ENCODE measurements at regions of chr15 and their contacts with region 1.

Region 1: DNA sequence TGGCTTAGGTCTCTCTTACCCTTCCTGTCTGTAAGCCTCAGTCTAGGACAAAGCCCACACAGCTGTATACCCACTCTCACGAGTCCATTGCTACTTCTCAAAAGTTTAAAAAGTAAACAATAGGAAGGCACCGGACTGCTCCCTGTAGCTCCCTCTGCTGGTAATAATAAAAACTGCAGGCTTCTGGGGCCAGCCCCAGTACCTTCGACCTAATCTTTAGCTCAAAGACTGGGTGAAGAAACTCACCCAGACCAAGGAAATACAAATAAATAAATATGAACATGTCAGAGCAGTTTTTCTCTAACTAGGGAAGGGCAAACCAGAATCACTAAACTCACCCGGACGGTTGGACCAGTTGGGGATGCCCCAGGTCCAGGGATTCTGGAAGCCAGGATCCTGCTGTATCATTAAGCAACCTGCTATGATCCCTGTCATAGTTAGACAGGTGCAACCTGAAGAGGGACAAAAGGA is 5.0 kb downstream of the FAM219B start:
- DNase-seq: no peak
- H3K4me3 ChIP-seq: no peak overlapping the region
- H3K27ac ChIP-seq: peak overlapping the region in 3 of 4 donors; percentile 13 to 48 (median 42)
- H3K4me1 ChIP-seq: peaks cover 26 to 40% (median 33%) of the 10 kb centered on the region in 4 donors
- H3K27me3 ChIP-seq: no peaks in the 10 kb centered on the region
- CTCF ChIP-seq: peak; percentile 90 to 97 (median 94)
- EP300 ChIP-seq: no peak
- POLR2A ChIP-seq: no peak

Region 2: DNA sequence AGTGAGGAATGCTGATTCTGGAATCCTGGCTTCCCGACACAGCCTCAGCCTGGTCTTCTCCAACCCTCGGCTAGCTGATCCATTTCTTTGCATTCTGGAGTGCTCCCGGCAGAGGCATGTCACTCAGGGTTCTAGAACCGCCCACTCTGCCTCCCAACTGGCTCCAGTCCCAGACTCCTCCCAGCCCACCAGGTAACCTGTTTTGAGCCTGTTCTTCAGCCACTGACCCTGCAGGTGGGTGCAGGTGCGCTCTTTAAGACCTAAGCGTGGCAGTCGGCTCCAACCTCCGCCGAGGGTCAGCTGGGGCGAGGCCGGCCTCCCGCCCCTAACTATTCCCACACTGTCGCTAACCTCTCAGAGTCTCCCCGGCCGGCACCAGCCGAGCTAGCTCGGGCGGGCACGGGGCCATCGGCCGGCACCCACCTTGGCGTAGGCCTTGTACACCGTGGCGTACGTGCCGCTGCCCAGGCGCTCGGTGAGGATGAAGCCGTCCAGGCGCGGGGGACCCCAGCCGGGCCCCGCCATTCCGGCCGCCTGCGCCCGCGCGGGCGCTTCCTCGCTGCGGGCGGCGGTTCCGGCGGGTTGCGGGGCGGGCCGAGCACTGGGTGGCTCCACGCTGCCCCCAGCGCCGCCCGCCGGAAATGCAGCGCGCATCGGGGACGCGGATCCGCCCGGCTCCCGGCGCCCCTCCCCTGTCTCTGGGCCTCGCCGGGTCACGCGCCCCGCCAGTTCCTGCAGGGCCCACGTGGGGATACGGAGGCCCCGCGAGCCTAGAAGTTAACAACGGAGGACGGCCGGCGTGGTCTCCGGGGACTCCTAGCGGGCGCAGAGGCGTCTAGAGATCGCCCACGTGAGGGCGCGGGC is 58.8 kb before region 1 on chr15 and contains the start of gene ULK3:
- intact Hi-C with region 1: loop called (anchors 1 kb)
- DNase-seq: peak; percentile 96
- H3K4me3 ChIP-seq: peak within 1 kb of the TSS; percentile 82 to 99 (median 92)
- H3K27ac ChIP-seq: peak within 1 kb of the TSS; percentile 74 to 90 (median 88)
- H3K4me1 ChIP-seq: peaks cover 23 to 53% (median 35%) of the 10 kb centered on the region in 4 donors
- H3K27me3 ChIP-seq: no peaks in the 10 kb centered on the region
- CTCF ChIP-seq: peak; percentile 62 to 89 (median 87)
- EP300 ChIP-seq: no peak
- POLR2A ChIP-seq: no peak
- total RNA-seq, gene ULK3: 24.5 to 49.2 (median 35.4) TPM

Region 3: DNA sequence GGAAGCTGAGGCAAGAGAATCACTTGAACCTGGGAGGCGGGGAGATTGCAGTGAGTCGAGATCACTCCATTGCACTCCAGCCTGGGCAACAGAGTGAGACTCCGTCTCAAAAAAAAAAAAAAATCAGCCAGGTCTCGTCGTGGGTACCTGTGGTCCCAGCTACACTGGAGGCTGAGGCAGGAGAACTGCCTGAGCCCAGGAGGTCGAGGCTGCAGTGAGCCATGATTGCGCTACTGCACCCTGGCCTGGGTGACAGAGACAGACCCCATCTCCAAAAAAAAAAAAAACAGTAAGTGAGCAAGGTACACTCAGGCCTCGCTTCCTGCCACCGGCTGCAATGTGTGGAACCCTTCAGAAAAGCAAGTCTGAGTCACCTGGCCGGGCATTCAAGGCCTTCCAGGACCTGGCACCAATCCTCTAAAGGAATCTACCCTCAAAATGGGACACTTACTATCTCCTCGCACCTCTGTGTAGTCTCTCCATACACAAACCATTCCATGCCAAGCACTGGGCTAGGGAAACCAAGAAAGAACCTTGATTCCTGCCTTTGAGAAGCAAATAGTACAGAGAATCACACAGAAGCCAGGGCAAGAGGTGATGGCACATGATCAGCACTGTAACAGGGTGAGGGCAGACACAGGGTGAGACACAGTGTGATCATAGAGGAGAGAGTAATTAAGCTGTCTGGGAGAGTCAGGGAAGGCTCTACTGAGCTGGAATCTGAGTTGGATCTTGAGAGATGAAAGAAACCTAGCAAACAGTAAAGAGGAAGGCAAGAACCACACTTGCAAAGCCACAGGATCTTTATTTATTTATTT is 38.2 kb before region 1 on chr15:
- intact Hi-C with region 1: loop called (anchors 5 kb)
- DNase-seq: no peak
- H3K4me3 ChIP-seq: no peak overlapping the region
- H3K27ac ChIP-seq: peak overlapping the region; percentile 8 to 63 (median 42)
- H3K4me1 ChIP-seq: peaks cover 63 to 73% (median 68%) of the 10 kb centered on the region in 4 donors
- H3K27me3 ChIP-seq: no peaks in the 10 kb centered on the region
- CTCF ChIP-seq: no peak
- EP300 ChIP-seq: no peak
- POLR2A ChIP-seq: no peak

Region 4: DNA sequence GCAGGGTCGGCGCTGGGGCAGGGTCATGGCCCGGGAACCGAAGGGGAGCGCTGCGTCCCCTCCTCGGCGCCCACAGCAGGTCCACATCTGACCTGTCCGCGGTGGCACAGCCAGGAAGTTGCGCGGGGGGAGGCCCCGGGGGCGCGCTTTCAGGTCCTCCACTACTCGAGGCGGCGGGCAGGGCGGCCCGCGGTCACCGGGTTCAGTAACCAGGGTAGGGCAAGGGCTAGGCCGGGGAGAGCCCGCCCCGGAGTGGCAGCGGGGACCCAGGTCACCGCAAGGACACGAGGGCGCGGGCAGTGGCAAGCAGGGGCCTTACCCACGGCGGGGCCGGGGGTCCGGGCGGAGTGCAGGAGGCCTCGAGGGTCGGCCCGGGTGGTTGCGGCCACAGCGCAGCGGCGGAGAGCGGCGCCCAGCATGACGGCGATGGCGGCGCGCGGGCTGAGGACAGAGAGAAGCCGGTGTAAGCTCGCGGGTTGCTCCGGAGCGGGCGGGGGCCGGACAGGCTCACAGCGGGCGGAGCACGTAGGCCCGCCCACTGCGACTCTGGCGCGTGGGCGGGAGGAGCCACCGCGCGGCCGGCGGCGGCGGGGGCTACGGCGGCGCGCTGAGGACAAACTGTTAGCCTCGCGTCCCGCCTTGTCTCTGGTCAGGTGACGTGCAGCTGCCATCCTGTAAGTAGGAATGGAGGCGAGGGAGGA is 36.1 kb after region 1 on chr15 and contains the start of gene COX5A:
- intact Hi-C with region 1: loop called (anchors 5 kb)
- DNase-seq: peak; percentile 95
- H3K4me3 ChIP-seq: peak within 1 kb of the TSS; percentile 78 to 99 (median 82)
- H3K27ac ChIP-seq: peak within 1 kb of the TSS; percentile 94 to 99 (median 94)
- H3K4me1 ChIP-seq: peaks cover 25 to 48% (median 42%) of the 10 kb centered on the region in 4 donors
- H3K27me3 ChIP-seq: no peaks in the 10 kb centered on the region
- CTCF ChIP-seq: peak in 1 of 3 experiments; percentile 17
- EP300 ChIP-seq: no peak
- POLR2A ChIP-seq: peak; percentile 62
- total RNA-seq, gene COX5A: 58.6 to 86.2 (median 75.5) TPM

Region 5: GRCh38 chr15:75008629-75009326 is 107.1 kb after region 1 on chr15:
- intact Hi-C with region 1: no loop called
- DNase-seq: no peak
- H3K4me3 ChIP-seq: no peak overlapping the region
- H3K27ac ChIP-seq: no peak overlapping the region
- H3K4me1 ChIP-seq: no peaks in the 10 kb centered on the region
- H3K27me3 ChIP-seq: no peaks in the 10 kb centered on the region
- CTCF ChIP-seq: no peak
- EP300 ChIP-seq: no peak
- POLR2A ChIP-seq: no peak

Region 6: GRCh38 chr15:75420698-75421097 is 519.1 kb after region 1 on chr15:
- intact Hi-C with region 1: no loop called
- DNase-seq: no peak
- H3K4me3 ChIP-seq: no peak overlapping the region
- H3K27ac ChIP-seq: no peak overlapping the region
- H3K4me1 ChIP-seq: peaks cover 0 to 4% (median 0%) of the 10 kb centered on the region in 4 donors
- H3K27me3 ChIP-seq: no peaks in the 10 kb centered on the region
- CTCF ChIP-seq: no peak
- EP300 ChIP-seq: no peak
- POLR2A ChIP-seq: no peak

Measured in esophagus muscularis mucosa (tissue), 4 donors.